Pancreas (tissue), 10 donors: ENCODE measurements at regions of chr1 and their contacts with region 1.

Region 1: DNA sequence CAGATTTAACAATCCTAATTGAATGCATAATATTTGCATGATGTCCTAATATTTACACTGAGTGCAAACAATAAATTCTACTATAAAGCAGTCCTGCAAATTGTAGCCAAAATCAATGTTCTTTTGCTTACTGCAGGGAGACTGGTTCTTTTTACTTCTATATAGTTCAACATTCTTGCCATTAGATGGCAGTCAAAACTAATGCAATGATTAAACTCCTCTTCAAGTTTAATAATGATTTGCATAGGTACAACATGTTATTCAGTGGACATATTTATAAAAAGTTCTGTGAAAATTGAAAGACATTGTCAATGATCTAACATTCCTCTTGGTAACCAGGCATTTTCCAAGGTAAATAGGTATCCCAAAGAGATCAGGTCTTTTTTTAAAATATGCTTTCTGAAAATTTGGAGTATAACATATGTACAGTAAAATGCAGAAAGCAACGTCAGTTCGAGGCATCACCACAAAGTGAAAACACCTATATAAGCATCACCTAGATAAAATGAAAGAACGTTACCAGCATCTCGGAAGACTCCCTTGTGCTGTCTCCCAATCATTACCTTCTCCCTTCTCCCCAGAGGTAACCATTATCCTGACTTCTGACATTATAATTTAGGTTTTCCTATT is 9.8 kb upstream of the FNBP1L start:
- DNase-seq: no peak
- ATAC-seq: peak; percentile 74 to 90 (median 82)
- H3K4me3 ChIP-seq: no peak overlapping the region
- H3K27ac ChIP-seq: no peak overlapping the region
- H3K4me1 ChIP-seq: peaks cover 4 to 12% (median 5%) of the 10 kb centered on the region in 3 donors
- H3K27me3 ChIP-seq: no peaks in the 10 kb centered on the region
- CTCF ChIP-seq: peak; percentile 11 to 66 (median 52)

Region 2: DNA sequence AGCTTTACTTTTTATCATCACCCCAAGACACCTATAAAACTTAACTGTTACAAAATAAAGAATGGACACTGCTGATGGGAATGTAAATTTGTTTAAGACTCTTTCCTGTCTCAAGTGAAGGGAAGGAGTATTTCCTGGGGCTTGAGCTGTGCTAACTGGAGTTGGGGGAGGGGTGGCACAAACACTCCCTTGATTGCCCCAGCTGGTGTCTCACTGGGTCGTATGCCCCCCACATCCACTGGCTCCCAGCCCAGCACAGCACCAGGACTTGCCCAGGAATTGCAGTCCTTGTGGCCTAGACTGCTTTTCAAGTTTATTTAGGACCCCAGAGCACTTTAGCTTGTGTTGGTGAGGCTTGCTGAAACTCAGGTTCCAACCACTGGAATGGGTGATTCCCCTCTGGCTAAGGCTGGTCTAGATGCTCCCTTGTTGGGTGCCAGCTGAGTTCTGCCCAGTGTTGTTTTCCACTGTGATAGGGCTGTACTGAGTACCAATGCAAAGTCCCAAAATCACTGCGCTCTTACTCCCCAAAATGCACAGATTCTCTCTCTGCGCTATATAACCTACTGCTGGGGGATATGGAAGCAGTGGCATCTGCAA is 141.4 kb before region 1 on chr1:
- intact Hi-C with region 1: no loop called
- DNase-seq: no peak
- ATAC-seq: no peak
- H3K4me3 ChIP-seq: no peak overlapping the region
- H3K27ac ChIP-seq: no peak overlapping the region
- H3K4me1 ChIP-seq: no peaks in the 10 kb centered on the region
- H3K27me3 ChIP-seq: no peaks in the 10 kb centered on the region
- CTCF ChIP-seq: no peak

Region 3: GRCh38 chr1:93814059-93814794 is 376.1 kb after region 1 on chr1:
- intact Hi-C with region 1: loop called (anchors 10 kb)
- DNase-seq: peak in 3 of 6 donors; percentile 24 to 73 (median 46)
- ATAC-seq: peak; percentile 79 to 96 (median 94)
- H3K4me3 ChIP-seq: no peak overlapping the region
- H3K27ac ChIP-seq: no peak overlapping the region
- H3K4me1 ChIP-seq: no peaks in the 10 kb centered on the region
- H3K27me3 ChIP-seq: no peaks in the 10 kb centered on the region
- CTCF ChIP-seq: peak; percentile 59 to 93 (median 84)